ENCODE measurements at regions of chr22 and their contacts with region 1.

Region 1: GRCh38 chr22:39946503-39947219 is 13.5 kb upstream of the TMA7B start:
- DNase-seq: peak; percentile 62
- H3K4me3 Mint-ChIP-seq: no peak overlapping the region
- H3K27ac Mint-ChIP-seq: no peak overlapping the region
- H3K4me1 Mint-ChIP-seq: peaks cover 19% of the 10 kb centered on the region
- H3K27me3 Mint-ChIP-seq: peaks cover 17% of the 10 kb centered on the region
- CTCF ChIP-seq: no peak

Region 2: GRCh38 chr22:39997939-39998338 is 51.3 kb after region 1 on chr22:
- CTCF ChIA-PET with region 1: no interaction called
- intact Hi-C with region 1: loop called (anchors 5 kb)
- DNase-seq: peak; percentile 82
- H3K4me3 Mint-ChIP-seq: peak overlapping the region; percentile 70
- H3K27ac Mint-ChIP-seq: peak overlapping the region; percentile 54
- H3K4me1 Mint-ChIP-seq: peaks cover 59% of the 10 kb centered on the region
- H3K27me3 Mint-ChIP-seq: peaks cover 9% of the 10 kb centered on the region
- CTCF ChIP-seq: no peak

Measured in Calu3 (cell line).